H1 (cell line): ENCODE measurements at regions of chrX and their contacts with region 1.

Region 1: GRCh38 chrX:109890895-109891502 is 111.9 kb upstream of the TMEM164 start:
- DNase-seq: peak; percentile 10 to 60
- H3K4me3 ChIP-seq: no peak overlapping the region
- H3K27ac ChIP-seq: no peak overlapping the region
- H3K4me1 ChIP-seq: no peaks in the 10 kb centered on the region
- H3K27me3 ChIP-seq: no peaks in the 10 kb centered on the region
- CTCF ChIP-seq: peak; percentile 65 to 87 (median 71)
- EP300 ChIP-seq: no peak
- POLR2A ChIP-seq: no peak
- RAD21 ChIP-seq: peak; percentile 61 to 70

Region 2: GRCh38 chrX:109709129-109709631 is 181.8 kb before region 1 on chrX:
- CTCF ChIA-PET with region 1: interaction called, 93 read pairs
- POLR2A ChIA-PET with region 1: no interaction called
- DNase-seq: no peak
- H3K4me3 ChIP-seq: no peak overlapping the region
- H3K27ac ChIP-seq: no peak overlapping the region
- H3K4me1 ChIP-seq: no peaks in the 10 kb centered on the region
- H3K27me3 ChIP-seq: no peaks in the 10 kb centered on the region
- CTCF ChIP-seq: no peak
- EP300 ChIP-seq: no peak
- POLR2A ChIP-seq: no peak
- RAD21 ChIP-seq: no peak

Region 3: DNA sequence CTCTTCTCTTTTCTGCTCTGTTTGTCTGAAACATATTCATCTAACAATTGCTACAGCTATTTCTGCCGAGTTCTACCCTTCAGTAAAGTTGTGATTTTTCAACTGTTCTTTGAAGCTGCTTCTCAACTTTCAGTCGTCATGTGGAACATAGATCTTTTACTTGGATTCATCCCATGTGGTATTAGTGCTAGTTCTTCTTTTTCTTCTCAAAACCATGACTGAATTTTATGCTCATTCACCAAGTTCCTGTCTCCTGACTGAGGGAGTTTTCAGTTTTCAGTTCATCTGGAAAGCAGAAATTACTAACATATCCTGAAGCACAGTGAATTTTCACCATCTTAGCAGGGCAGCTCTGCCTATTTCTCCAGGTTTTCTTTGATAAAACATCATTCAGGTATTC is 170.1 kb before region 1 on chrX:
- CTCF ChIA-PET with region 1: interaction called, 14 read pairs
- POLR2A ChIA-PET with region 1: no interaction called
- DNase-seq: no peak
- H3K4me3 ChIP-seq: no peak overlapping the region
- H3K27ac ChIP-seq: no peak overlapping the region
- H3K4me1 ChIP-seq: no peaks in the 10 kb centered on the region
- H3K27me3 ChIP-seq: no peaks in the 10 kb centered on the region
- CTCF ChIP-seq: no peak
- EP300 ChIP-seq: no peak
- POLR2A ChIP-seq: no peak
- RAD21 ChIP-seq: no peak

Region 4: GRCh38 chrX:109782994-109783700 is 107.9 kb before region 1 on chrX:
- CTCF ChIA-PET with region 1: no interaction called
- POLR2A ChIA-PET with region 1: no interaction called
- DNase-seq: no peak
- H3K4me3 ChIP-seq: no peak overlapping the region
- H3K27ac ChIP-seq: no peak overlapping the region
- H3K4me1 ChIP-seq: no peaks in the 10 kb centered on the region
- H3K27me3 ChIP-seq: no peaks in the 10 kb centered on the region
- CTCF ChIP-seq: no peak
- EP300 ChIP-seq: no peak
- POLR2A ChIP-seq: no peak
- RAD21 ChIP-seq: no peak

Region 5: GRCh38 chrX:109862433-109862832 is 28.6 kb before region 1 on chrX:
- CTCF ChIA-PET with region 1: interaction called, 12 read pairs
- POLR2A ChIA-PET with region 1: no interaction called
- DNase-seq: no peak
- H3K4me3 ChIP-seq: no peak overlapping the region
- H3K27ac ChIP-seq: no peak overlapping the region
- H3K4me1 ChIP-seq: no peaks in the 10 kb centered on the region
- H3K27me3 ChIP-seq: no peaks in the 10 kb centered on the region
- CTCF ChIP-seq: no peak
- EP300 ChIP-seq: no peak
- POLR2A ChIP-seq: no peak
- RAD21 ChIP-seq: no peak

Region 6: GRCh38 chrX:109911046-109911445 is 20.0 kb after region 1 on chrX:
- CTCF ChIA-PET with region 1: interaction called, 15 read pairs
- POLR2A ChIA-PET with region 1: no interaction called
- DNase-seq: no peak
- H3K4me3 ChIP-seq: no peak overlapping the region
- H3K27ac ChIP-seq: no peak overlapping the region
- H3K4me1 ChIP-seq: no peaks in the 10 kb centered on the region
- H3K27me3 ChIP-seq: no peaks in the 10 kb centered on the region
- CTCF ChIP-seq: peak in 1 of 3 experiments; percentile 23; a peak in 2 of 4 replicates
- EP300 ChIP-seq: no peak
- POLR2A ChIP-seq: no peak
- RAD21 ChIP-seq: peak in 1 of 2 experiments; percentile 28; a peak in 2 of 4 replicates